Activated CD4-positive, alpha-beta T cell treated with anti-CD3 and anti-CD28 coated beads for 36 hours (primary cell): ENCODE measurements at regions of chr22 and their contacts with region 1.

Region 1: GRCh38 chr22:45064313-45065278 is 54.8 kb upstream of the PHF21B start:
- DNase-seq: peak; percentile 86
- ATAC-seq: peak; percentile 95
- H3K4me3 Mint-ChIP-seq: no peak overlapping the region
- H3K27ac Mint-ChIP-seq: peak overlapping the region; percentile 76
- H3K4me1 Mint-ChIP-seq: peaks cover 14% of the 10 kb centered on the region
- H3K27me3 Mint-ChIP-seq: peaks cover 6% of the 10 kb centered on the region

Region 2: GRCh38 chr22:45009881-45010531 is 54.6 kb before region 1 on chr22 and contains the start of gene PHF21B:
- CTCF ChIA-PET with region 1: no interaction called
- POLR2A ChIA-PET with region 1: no interaction called
- intact Hi-C with region 1: loop called in 1 of 2 experiments (anchors 2 kb)
- DNase-seq: peak; percentile 49
- ATAC-seq: peak; percentile 45
- H3K4me3 Mint-ChIP-seq: peak within 1 kb of the TSS; percentile 72
- H3K27ac Mint-ChIP-seq: no peak within 1 kb of the TSS
- H3K4me1 Mint-ChIP-seq: peaks cover 15% of the 10 kb centered on the region
- H3K27me3 Mint-ChIP-seq: peaks cover 51% of the 10 kb centered on the region
- total RNA-seq, gene PHF21B: not detected

Region 3: GRCh38 chr22:45082795-45083194 is 18.2 kb after region 1 on chr22:
- CTCF ChIA-PET with region 1: interaction called, 3 read pairs
- POLR2A ChIA-PET with region 1: no interaction called
- intact Hi-C with region 1: loop called in 1 of 2 experiments (anchors 1 kb)
- DNase-seq: peak; percentile 62
- ATAC-seq: no peak
- H3K4me3 Mint-ChIP-seq: no peak overlapping the region
- H3K27ac Mint-ChIP-seq: no peak overlapping the region
- H3K4me1 Mint-ChIP-seq: peaks cover 22% of the 10 kb centered on the region
- H3K27me3 Mint-ChIP-seq: peaks cover 39% of the 10 kb centered on the region

Region 4: DNA sequence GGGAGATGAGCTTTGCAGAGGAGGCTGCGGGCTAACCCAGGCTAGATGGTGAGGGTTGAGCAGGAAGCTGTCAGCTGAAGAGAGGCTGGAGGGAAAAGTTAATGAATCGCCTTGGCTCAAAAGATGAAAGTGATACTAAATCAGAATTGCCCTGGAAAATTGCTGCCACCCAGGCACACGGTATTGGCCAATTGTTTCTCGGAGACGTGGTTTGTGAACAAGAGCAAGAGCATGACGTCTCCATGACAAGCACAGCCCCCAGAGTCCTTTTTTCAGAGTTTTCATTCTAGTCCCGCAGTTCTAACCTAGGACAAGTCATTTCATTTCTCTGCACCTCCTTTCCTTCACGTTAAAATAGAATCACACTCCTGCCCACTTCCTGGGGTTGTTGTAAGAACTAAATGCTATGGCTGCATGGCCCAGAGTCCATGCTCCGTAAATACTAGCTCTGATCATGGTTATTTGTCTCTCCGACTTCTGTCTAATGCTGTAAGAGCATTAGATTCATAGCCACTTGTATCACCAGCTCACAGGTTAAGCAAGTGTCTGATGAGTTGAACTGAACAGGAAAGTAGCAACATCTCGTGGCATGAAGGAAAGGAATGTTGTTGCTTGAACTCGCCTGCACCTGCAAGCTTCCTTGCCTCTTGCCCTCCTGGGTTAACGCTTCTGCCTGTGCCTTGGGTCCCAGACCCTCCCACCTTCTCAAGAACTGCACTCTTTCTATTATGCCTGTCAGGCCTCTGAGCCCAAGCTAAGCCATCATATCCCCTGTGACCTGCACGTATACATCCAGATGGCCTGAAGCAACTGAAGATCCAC is 65.3 kb after region 1 on chr22:
- CTCF ChIA-PET with region 1: no interaction called
- POLR2A ChIA-PET with region 1: interaction called, 3 read pairs
- intact Hi-C with region 1: loop called in 1 of 2 experiments (anchors 1 kb)
- DNase-seq: peak; percentile 75
- ATAC-seq: peak; percentile 93
- H3K4me3 Mint-ChIP-seq: peak overlapping the region; percentile 11
- H3K27ac Mint-ChIP-seq: peak overlapping the region; percentile 89
- H3K4me1 Mint-ChIP-seq: peaks cover 28% of the 10 kb centered on the region
- H3K27me3 Mint-ChIP-seq: no peaks in the 10 kb centered on the region